AG04450 (cell line): ENCODE measurements at regions of chr22 and their contacts with region 1.

Region 1: GRCh38 chr22:38114484-38115398 is 4.3 kb upstream of the BAIAP2L2 start:
- DNase-seq: peak; percentile 66
- H3K4me3 ChIP-seq: no peak overlapping the region
- H3K27ac ChIP-seq: no peak overlapping the region
- H3K27me3 ChIP-seq: peaks cover 2% of the 10 kb centered on the region
- CTCF ChIP-seq: peak; percentile 96

Region 2: GRCh38 chr22:38088629-38089473 is 25.9 kb before region 1 on chr22:
- CTCF ChIA-PET with region 1: interaction called, 23 read pairs
- POLR2A ChIA-PET with region 1: no interaction called
- DNase-seq: no peak
- H3K4me3 ChIP-seq: peak overlapping the region; percentile 13; the same call in 1 of the 2 replicates
- H3K27ac ChIP-seq: no peak overlapping the region
- H3K27me3 ChIP-seq: peaks cover 34% of the 10 kb centered on the region
- CTCF ChIP-seq: no peak

Region 3: DNA sequence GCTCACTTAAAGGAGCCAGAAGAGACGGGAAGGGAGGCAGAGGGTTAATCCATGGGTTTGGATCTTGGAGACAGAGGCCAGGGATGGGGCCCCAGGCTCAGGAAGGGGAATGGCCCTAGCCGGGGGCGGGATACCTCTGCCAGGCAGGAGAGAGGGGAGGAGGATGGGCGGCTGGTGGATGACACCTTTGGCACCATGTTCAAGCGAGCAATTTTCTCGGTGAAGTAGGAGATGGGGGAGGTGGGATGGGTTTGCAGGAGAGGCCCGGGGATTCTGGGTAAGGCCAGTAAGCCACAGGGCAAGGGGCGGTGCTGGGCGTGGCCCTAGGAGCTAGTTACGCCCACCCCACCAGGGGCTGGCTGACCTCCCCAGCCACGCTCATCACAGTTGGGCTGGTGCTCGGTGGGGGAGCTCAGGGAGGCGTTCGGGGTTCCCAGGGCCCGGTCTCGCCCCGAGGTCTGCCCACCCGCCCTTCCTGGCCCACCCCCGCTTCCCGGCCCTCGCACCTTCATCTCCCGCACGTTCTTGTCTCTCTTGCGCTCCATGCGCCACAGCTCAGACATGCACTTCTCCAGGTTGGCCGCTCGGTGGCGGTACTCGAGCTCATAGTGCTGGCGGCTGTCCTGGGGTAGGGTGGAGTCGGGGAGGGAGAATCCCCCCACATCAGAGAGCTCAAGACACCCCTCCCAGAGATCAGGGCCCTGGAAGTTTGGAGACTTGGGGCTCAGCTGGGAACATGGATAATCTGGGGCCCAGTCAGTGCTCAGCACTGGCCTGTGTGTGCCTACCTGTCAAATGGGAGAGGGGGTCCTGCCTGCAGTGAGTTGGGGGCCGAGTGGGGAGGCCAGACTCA is 17.0 kb before region 1 on chr22:
- CTCF ChIA-PET with region 1: interaction called, 23 read pairs
- POLR2A ChIA-PET with region 1: no interaction called
- DNase-seq: no peak
- H3K4me3 ChIP-seq: no peak overlapping the region
- H3K27ac ChIP-seq: no peak overlapping the region
- H3K27me3 ChIP-seq: peaks cover 4% of the 10 kb centered on the region
- CTCF ChIP-seq: peak; percentile 49

Region 4: GRCh38 chr22:38136584-38136983 is 21.8 kb after region 1 on chr22:
- CTCF ChIA-PET with region 1: interaction called, 17 read pairs
- POLR2A ChIA-PET with region 1: no interaction called
- DNase-seq: no peak
- H3K4me3 ChIP-seq: no peak overlapping the region
- H3K27ac ChIP-seq: no peak overlapping the region
- H3K27me3 ChIP-seq: no peaks in the 10 kb centered on the region
- CTCF ChIP-seq: 0 out of 2 replicates have a peak, but pooled peaks have one; percentile 4

Region 5: GRCh38 chr22:38222797-38223119 is 108.0 kb after region 1 on chr22:
- CTCF ChIA-PET with region 1: no interaction called
- POLR2A ChIA-PET with region 1: no interaction called
- DNase-seq: no peak
- H3K4me3 ChIP-seq: no peak overlapping the region
- H3K27ac ChIP-seq: no peak overlapping the region
- H3K27me3 ChIP-seq: no peaks in the 10 kb centered on the region
- CTCF ChIP-seq: no peak